ENCODE measurements at regions of chr4 and their contacts with region 1.

Region 1: GRCh38 chr4:113952452-113953029 is 26.9 kb downstream of the ARSJ start:
- DNase-seq: peak; percentile 27
- H3K4me3 Mint-ChIP-seq: no peak overlapping the region
- H3K27ac Mint-ChIP-seq: no peak overlapping the region
- H3K4me1 Mint-ChIP-seq: peaks cover 8% of the 10 kb centered on the region
- H3K27me3 Mint-ChIP-seq: no peaks in the 10 kb centered on the region

Region 2: GRCh38 chr4:113849771-113850170 is 102.8 kb before region 1 on chr4:
- CTCF ChIA-PET with region 1: no interaction called
- intact Hi-C with region 1: no loop called
- DNase-seq: no peak
- H3K4me3 Mint-ChIP-seq: no peak overlapping the region
- H3K27ac Mint-ChIP-seq: no peak overlapping the region
- H3K4me1 Mint-ChIP-seq: peaks cover 3% of the 10 kb centered on the region
- H3K27me3 Mint-ChIP-seq: no peaks in the 10 kb centered on the region

Region 3: GRCh38 chr4:114076899-114077570 is 124.5 kb after region 1 on chr4:
- CTCF ChIA-PET with region 1: interaction called, 24 read pairs
- intact Hi-C with region 1: no loop called
- DNase-seq: no peak
- H3K4me3 Mint-ChIP-seq: no peak overlapping the region
- H3K27ac Mint-ChIP-seq: no peak overlapping the region
- H3K4me1 Mint-ChIP-seq: no peaks in the 10 kb centered on the region
- H3K27me3 Mint-ChIP-seq: no peaks in the 10 kb centered on the region

Region 4: DNA sequence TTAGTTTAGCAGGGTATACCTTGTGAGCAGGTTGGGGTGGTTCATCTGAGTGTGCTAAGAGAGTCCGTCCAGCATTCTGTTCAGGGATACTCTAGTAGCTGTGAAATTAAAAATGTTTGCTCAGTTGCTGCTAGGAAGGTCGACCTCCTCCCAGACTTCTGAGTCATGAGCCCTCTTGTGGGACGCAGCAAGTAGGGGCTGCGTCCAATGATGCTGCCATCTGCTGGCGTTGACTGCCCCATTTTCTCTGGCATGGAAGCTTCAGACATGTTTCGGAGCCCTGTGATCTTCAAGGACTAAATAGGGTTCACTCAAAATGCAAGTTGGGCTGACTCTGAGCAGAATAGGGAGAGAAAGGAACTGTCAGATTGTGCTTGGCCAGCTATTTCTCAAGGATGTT is 227.9 kb after region 1 on chr4:
- CTCF ChIA-PET with region 1: no interaction called
- intact Hi-C with region 1: loop called (anchors 1 kb)
- DNase-seq: peak; percentile 56
- H3K4me3 Mint-ChIP-seq: no peak overlapping the region
- H3K27ac Mint-ChIP-seq: no peak overlapping the region
- H3K4me1 Mint-ChIP-seq: no peaks in the 10 kb centered on the region
- H3K27me3 Mint-ChIP-seq: no peaks in the 10 kb centered on the region

Region 5: GRCh38 chr4:114386637-114387233 is 434.2 kb after region 1 on chr4:
- CTCF ChIA-PET with region 1: no interaction called
- intact Hi-C with region 1: loop called (anchors 1 kb)
- DNase-seq: peak; percentile 7
- H3K4me3 Mint-ChIP-seq: no peak overlapping the region
- H3K27ac Mint-ChIP-seq: no peak overlapping the region
- H3K4me1 Mint-ChIP-seq: no peaks in the 10 kb centered on the region
- H3K27me3 Mint-ChIP-seq: peaks cover 4% of the 10 kb centered on the region

Region 6: GRCh38 chr4:114659386-114660008 is 707.0 kb after region 1 on chr4:
- CTCF ChIA-PET with region 1: no interaction called
- intact Hi-C with region 1: loop called (anchors 10 kb)
- DNase-seq: peak; percentile 63
- H3K4me3 Mint-ChIP-seq: no peak overlapping the region
- H3K27ac Mint-ChIP-seq: no peak overlapping the region
- H3K4me1 Mint-ChIP-seq: no peaks in the 10 kb centered on the region
- H3K27me3 Mint-ChIP-seq: peaks cover 17% of the 10 kb centered on the region

Region 7: DNA sequence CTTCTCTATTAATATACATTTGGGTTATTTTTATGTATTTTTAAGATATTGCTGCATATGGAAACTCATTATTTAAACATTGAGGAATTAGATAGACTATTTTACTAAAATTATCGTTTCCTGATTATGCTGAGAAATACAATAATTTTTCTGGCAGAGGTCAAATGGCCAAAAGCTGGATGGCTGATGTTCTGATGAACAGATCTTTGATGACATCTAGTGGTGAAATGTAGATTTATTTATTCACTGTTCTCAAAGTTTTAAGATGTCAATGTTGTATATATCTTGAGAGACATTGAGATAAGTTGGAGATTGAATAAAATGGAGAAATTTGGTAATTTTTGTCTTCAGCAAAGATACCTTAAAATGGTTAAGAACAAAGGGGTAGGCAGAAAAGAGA is 742.2 kb after region 1 on chr4:
- CTCF ChIA-PET with region 1: no interaction called
- intact Hi-C with region 1: loop called (anchors 10 kb)
- DNase-seq: no peak
- H3K4me3 Mint-ChIP-seq: no peak overlapping the region
- H3K27ac Mint-ChIP-seq: no peak overlapping the region
- H3K4me1 Mint-ChIP-seq: no peaks in the 10 kb centered on the region
- H3K27me3 Mint-ChIP-seq: peaks cover 5% of the 10 kb centered on the region

Region 8: GRCh38 chr4:115187136-115187535 is 1234.6 kb after region 1 on chr4:
- CTCF ChIA-PET with region 1: no interaction called
- intact Hi-C with region 1: loop called (anchors 5 kb)
- DNase-seq: no peak
- H3K4me3 Mint-ChIP-seq: no peak overlapping the region
- H3K27ac Mint-ChIP-seq: no peak overlapping the region
- H3K4me1 Mint-ChIP-seq: no peaks in the 10 kb centered on the region
- H3K27me3 Mint-ChIP-seq: no peaks in the 10 kb centered on the region

Measured in activated naive CD4-positive, alpha-beta T cell treated with anti-CD3 and anti-CD28 coated beads for 36 hours (primary cell).